ENCODE measurements at regions of chr7 and their contacts with region 1.

Region 1: GRCh38 chr7:46257766-46258448 is 336.8 kb upstream of the IGFBP3 start:
- DNase-seq: peak; percentile 41 to 87
- H3K4me3 ChIP-seq: no peak overlapping the region
- H3K27ac ChIP-seq: peak overlapping the region; percentile 12; the same call in 1 of the 2 replicates
- H3K4me1 ChIP-seq: peaks cover 23% of the 10 kb centered on the region
- H3K27me3 ChIP-seq: no peaks in the 10 kb centered on the region
- CTCF ChIP-seq: no peak

Region 2: DNA sequence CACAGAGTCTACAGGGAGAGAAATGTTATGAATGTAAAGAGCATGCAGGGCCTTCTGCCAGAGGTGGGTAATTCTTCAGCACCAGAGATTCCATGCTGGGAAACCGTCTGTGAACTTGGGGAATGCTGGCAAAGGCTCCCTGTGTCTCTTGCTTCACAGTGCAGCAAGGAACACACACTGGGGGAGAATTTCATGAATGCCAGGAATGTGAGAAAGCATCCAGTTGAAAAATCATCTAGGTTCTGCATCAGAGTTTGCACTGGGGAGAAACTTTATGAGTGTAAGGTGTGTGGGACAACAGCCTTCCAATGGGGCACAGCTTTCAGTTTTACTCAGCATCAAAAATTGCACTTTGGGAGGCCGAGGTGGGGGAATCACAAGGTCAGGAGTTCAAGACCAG is 112.5 kb before region 1 on chr7:
- CTCF ChIA-PET with region 1: no interaction called
- POLR2A ChIA-PET with region 1: no interaction called
- intact Hi-C with region 1: loop called (anchors 1 kb)
- DNase-seq: peak; percentile 89 to 99
- H3K4me3 ChIP-seq: no peak overlapping the region
- H3K27ac ChIP-seq: peak overlapping the region; percentile 80
- H3K4me1 ChIP-seq: peaks cover 29% of the 10 kb centered on the region
- H3K27me3 ChIP-seq: no peaks in the 10 kb centered on the region
- CTCF ChIP-seq: no peak

Region 3: GRCh38 chr7:46282155-46282554 is 24.2 kb after region 1 on chr7:
- CTCF ChIA-PET with region 1: no interaction called
- POLR2A ChIA-PET with region 1: no interaction called
- intact Hi-C with region 1: loop called (anchors 2 kb)
- DNase-seq: no peak
- H3K4me3 ChIP-seq: no peak overlapping the region
- H3K27ac ChIP-seq: peak overlapping the region; percentile 83
- H3K4me1 ChIP-seq: peaks cover 31% of the 10 kb centered on the region
- H3K27me3 ChIP-seq: no peaks in the 10 kb centered on the region
- CTCF ChIP-seq: no peak

Region 4: GRCh38 chr7:46291064-46291463 is 33.2 kb after region 1 on chr7:
- CTCF ChIA-PET with region 1: no interaction called
- POLR2A ChIA-PET with region 1: interaction called, 4 read pairs
- intact Hi-C with region 1: loop called (anchors 2 kb)
- DNase-seq: peak; percentile 72 to 83
- H3K4me3 ChIP-seq: no peak overlapping the region
- H3K27ac ChIP-seq: peak overlapping the region; percentile 77
- H3K4me1 ChIP-seq: peaks cover 30% of the 10 kb centered on the region
- H3K27me3 ChIP-seq: no peaks in the 10 kb centered on the region
- CTCF ChIP-seq: no peak